Psoas muscle (tissue), 8 donors: ENCODE measurements at regions of chr16 and their contacts with region 1.

Region 1: GRCh38 chr16:35425270-35425669 is 1965.9 kb downstream of the TP53TG3F start:
- DNase-seq: no peak
- ATAC-seq: no peak
- H3K4me3 ChIP-seq: no peak overlapping the region
- H3K27ac ChIP-seq: no peak overlapping the region
- H3K4me1 ChIP-seq: no peaks in the 10 kb centered on the region
- H3K27me3 ChIP-seq: no peaks in the 10 kb centered on the region
- CTCF ChIP-seq: no peak

Region 2: DNA sequence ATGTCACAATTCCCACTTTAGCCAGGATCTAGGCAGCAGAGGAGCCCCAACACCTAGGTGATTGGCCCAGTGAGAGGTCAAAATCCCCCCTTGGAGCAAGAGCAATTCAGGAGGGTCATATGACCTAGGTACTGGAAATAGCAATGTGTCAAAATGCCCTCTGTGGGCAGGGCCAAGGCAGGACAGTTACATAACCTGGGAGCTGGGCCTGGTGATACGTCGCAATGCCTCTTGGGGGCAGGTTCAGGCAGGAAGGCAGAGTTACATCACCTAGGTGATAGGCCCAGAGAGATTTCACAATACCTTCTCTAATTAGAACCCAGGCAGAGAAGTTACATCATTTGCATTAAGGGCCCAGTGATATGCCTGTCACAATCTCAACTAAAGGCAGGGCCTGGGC is 59.6 kb before region 1 on chr16:
- intact Hi-C with region 1: no loop called
- DNase-seq: no peak
- ATAC-seq: no peak
- H3K4me3 ChIP-seq: no peak overlapping the region
- H3K27ac ChIP-seq: no peak overlapping the region
- H3K4me1 ChIP-seq: no peaks in the 10 kb centered on the region
- H3K27me3 ChIP-seq: no peaks in the 10 kb centered on the region
- CTCF ChIP-seq: no peak

Region 3: DNA sequence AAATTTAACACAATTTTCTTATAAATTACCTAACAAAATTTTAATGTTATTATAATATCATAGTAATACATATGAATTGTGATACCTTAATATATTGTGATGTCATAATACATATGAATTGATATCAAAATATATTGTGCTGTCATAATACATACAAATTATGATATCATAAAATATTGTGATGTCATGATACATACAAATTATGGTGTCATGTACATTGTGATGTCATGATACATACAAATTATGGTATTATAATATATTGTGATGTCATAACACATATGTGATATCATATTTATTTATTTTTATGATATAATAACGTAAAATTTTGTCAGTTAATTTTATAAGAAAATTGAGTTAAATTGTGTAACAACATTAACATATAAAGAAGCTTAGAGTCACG is 38.7 kb before region 1 on chr16:
- intact Hi-C with region 1: no loop called
- DNase-seq: no peak
- ATAC-seq: no peak
- H3K4me3 ChIP-seq: no peak overlapping the region
- H3K27ac ChIP-seq: no peak overlapping the region
- H3K4me1 ChIP-seq: no peaks in the 10 kb centered on the region
- H3K27me3 ChIP-seq: no peaks in the 10 kb centered on the region
- CTCF ChIP-seq: no peak

Region 4: DNA sequence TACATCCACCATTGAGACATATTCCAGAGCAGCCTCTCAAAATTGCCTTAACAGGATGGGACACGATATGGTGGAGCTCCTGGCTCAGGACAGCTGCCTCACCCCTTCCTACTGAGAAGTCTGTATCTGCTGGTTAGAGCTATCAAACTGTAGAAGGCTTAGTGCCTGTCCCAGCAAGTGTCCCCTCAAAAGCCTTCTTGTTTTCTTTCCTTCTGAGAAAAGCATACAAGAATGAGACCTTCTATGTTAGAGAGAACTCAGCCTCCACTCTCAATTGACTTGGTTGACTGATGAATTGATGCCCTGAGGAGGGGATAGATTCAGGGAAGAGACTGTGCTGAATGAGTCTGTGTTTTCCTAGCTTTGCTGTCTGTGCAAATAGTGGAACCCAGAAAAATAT is 55.1 kb after region 1 on chr16:
- intact Hi-C with region 1: loop called in 1 of 2 experiments (anchors 5 kb)
- DNase-seq: no peak
- ATAC-seq: no peak
- H3K4me3 ChIP-seq: no peak overlapping the region
- H3K27ac ChIP-seq: no peak overlapping the region
- H3K4me1 ChIP-seq: no peaks in the 10 kb centered on the region
- H3K27me3 ChIP-seq: no peaks in the 10 kb centered on the region
- CTCF ChIP-seq: no peak